CD4-positive, alpha-beta T cell (primary cell): ENCODE measurements at regions of chr5 and their contacts with region 1.

Region 1: GRCh38 chr5:55134053-55134722 is 25.8 kb upstream of the GPX8 start:
- DNase-seq: no peak
- ATAC-seq: no peak
- H3K4me3 ChIP-seq: no peak overlapping the region
- H3K4me3 Mint-ChIP-seq: no peak overlapping the region
- H3K27ac ChIP-seq: no peak overlapping the region
- H3K27ac Mint-ChIP-seq: no peak overlapping the region
- H3K4me1 ChIP-seq: peaks cover 7% of the 10 kb centered on the region
- H3K4me1 Mint-ChIP-seq: peaks cover 10% of the 10 kb centered on the region
- H3K27me3 ChIP-seq: no peaks in the 10 kb centered on the region
- H3K27me3 Mint-ChIP-seq: no peaks in the 10 kb centered on the region
- CTCF ChIP-seq: no peak

Region 2: GRCh38 chr5:55062039-55062779 is 72.0 kb before region 1 on chr5:
- CTCF ChIA-PET with region 1: no interaction called
- POLR2A ChIA-PET with region 1: no interaction called
- intact Hi-C with region 1: loop called in 1 of 2 experiments (anchors 5 kb)
- DNase-seq: peak; percentile 3 to 89 (median 32)
- ATAC-seq: peak; percentile 77
- H3K4me3 ChIP-seq: peak overlapping the region; percentile 42
- H3K4me3 Mint-ChIP-seq: peak overlapping the region; percentile 77
- H3K27ac ChIP-seq: no peak overlapping the region
- H3K27ac Mint-ChIP-seq: peak overlapping the region; percentile 14
- H3K4me1 ChIP-seq: peaks cover 22% of the 10 kb centered on the region
- H3K4me1 Mint-ChIP-seq: peaks cover 68% of the 10 kb centered on the region
- H3K27me3 ChIP-seq: no peaks in the 10 kb centered on the region
- H3K27me3 Mint-ChIP-seq: no peaks in the 10 kb centered on the region
- CTCF ChIP-seq: no peak

Region 3: GRCh38 chr5:55258339-55258738 is 124.2 kb after region 1 on chr5:
- CTCF ChIA-PET with region 1: no interaction called
- POLR2A ChIA-PET with region 1: no interaction called
- intact Hi-C with region 1: no loop called
- DNase-seq: no peak
- ATAC-seq: no peak
- H3K4me3 ChIP-seq: no peak overlapping the region
- H3K4me3 Mint-ChIP-seq: no peak overlapping the region
- H3K27ac ChIP-seq: no peak overlapping the region
- H3K27ac Mint-ChIP-seq: no peak overlapping the region
- H3K4me1 ChIP-seq: no peaks in the 10 kb centered on the region
- H3K4me1 Mint-ChIP-seq: no peaks in the 10 kb centered on the region
- H3K27me3 ChIP-seq: no peaks in the 10 kb centered on the region
- H3K27me3 Mint-ChIP-seq: no peaks in the 10 kb centered on the region
- CTCF ChIP-seq: no peak